Tibial artery (tissue), 4 donors: ENCODE measurements at regions of chr18 and their contacts with region 1.

Region 1: GRCh38 chr18:36195427-36196122 is 8.3 kb downstream of the MOCOS start:
- DNase-seq: no peak
- H3K4me3 ChIP-seq: no peak overlapping the region
- H3K27ac ChIP-seq: no peak overlapping the region
- H3K4me1 ChIP-seq: no peaks in the 10 kb centered on the region
- H3K27me3 ChIP-seq: no peaks in the 10 kb centered on the region
- CTCF ChIP-seq: no peak

Region 2: DNA sequence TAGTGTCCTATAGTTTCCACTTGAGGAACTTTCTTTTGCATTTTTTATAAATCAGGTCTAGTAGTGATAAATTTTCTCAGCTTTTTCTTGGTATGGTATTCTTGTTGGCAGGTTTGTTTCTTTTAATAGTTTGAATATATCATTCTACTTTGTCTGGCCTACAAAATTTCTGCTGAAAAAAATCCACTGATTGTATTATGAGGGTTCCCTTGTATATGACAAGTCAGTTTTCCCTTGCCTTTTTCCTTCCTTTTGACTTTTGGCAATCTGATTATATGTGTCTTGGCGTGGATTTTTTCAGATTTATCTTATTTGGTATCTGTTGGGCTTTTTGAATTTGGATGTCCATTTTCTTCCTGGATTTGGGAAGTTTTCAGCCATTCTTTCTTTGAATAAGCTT is 33.6 kb after region 1 on chr18:
- intact Hi-C with region 1: loop called (anchors 2 kb)
- DNase-seq: no peak
- H3K4me3 ChIP-seq: no peak overlapping the region
- H3K27ac ChIP-seq: no peak overlapping the region
- H3K4me1 ChIP-seq: no peaks in the 10 kb centered on the region
- H3K27me3 ChIP-seq: no peaks in the 10 kb centered on the region
- CTCF ChIP-seq: no peak